ENCODE measurements at regions of chr1 and their contacts with region 1.

Region 1: DNA sequence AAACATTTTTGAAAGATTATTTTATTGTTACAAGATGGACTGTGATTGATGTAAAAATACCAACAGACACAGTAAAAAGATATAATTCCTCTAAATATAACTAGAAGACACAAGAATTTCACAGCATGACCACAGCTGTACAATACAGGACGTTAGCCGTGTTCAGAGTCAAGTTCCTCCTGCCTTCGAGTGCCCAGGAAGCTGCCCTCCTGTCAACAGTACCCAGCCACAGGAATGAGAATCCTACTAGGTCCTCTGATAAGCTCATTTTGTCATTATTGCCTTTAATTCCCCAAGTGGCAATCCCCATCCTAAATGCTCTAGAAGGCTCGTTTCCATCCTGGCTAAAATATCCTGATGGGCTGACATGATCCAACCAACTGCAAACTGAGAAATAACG is 16.4 kb upstream of the CAPN2 start:
- DNase-seq: no peak
- H3K4me3 ChIP-seq: no peak overlapping the region
- H3K4me3 Mint-ChIP-seq: no peak overlapping the region
- H3K27ac ChIP-seq: no peak overlapping the region
- H3K27ac Mint-ChIP-seq: no peak overlapping the region
- H3K4me1 ChIP-seq: peaks cover 7% of the 10 kb centered on the region
- H3K4me1 Mint-ChIP-seq: peaks cover 4 to 13% (median 5%) of the 10 kb centered on the region in 4 donors
- H3K27me3 ChIP-seq: no peaks in the 10 kb centered on the region
- H3K27me3 Mint-ChIP-seq: peaks cover 2 to 5% of the 10 kb centered on the region in 2 donors

Region 2: GRCh38 chr1:223683586-223684487 is 12.1 kb before region 1 on chr1:
- CTCF ChIA-PET with region 1: interaction called, 13 read pairs
- POLR2A ChIA-PET with region 1: no interaction called
- intact Hi-C with region 1: no loop called
- DNase-seq: peak; percentile 43 to 61 (median 52)
- H3K4me3 ChIP-seq: no peak overlapping the region
- H3K4me3 Mint-ChIP-seq: no peak overlapping the region
- H3K27ac ChIP-seq: no peak overlapping the region
- H3K27ac Mint-ChIP-seq: peak overlapping the region in 1 of 7 donors; percentile 67
- H3K4me1 ChIP-seq: no peaks in the 10 kb centered on the region
- H3K4me1 Mint-ChIP-seq: no peaks in the 10 kb centered on the region
- H3K27me3 ChIP-seq: no peaks in the 10 kb centered on the region
- H3K27me3 Mint-ChIP-seq: peaks cover 8 to 9% of the 10 kb centered on the region in 2 donors

Region 3: DNA sequence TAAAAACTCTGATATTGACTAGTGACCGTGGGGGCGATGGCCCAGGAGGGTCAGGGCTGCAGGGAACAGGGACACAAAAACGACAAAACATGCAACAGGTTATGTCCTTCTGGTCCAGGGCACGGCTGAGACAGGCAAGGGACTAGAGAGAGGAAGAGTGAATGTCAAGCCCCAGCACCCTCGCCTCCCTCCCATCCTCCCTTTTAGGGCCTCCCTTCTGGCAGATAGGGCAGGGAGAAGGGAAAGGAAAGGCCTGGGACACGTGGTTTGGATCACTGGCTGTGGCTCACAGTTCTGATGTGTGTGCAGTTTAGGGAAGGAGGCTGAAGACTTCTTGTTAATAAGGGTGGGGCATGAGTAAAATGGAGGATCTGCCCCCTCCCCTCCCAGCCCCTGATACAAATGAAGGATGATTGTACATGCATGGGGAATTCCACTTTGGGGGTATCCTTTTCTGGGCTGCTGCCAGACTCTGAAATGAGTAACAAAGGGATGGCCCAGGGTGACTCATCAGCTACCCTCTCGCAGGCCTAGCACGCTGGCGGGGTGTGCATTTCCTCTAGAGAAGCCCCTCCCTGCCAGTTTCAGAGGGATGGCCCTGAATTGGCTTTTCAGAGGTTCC is 30.6 kb after region 1 on chr1:
- CTCF ChIA-PET with region 1: interaction called, 15 read pairs
- POLR2A ChIA-PET with region 1: no interaction called
- intact Hi-C with region 1: no loop called
- DNase-seq: peak; percentile 68 to 98 (median 78)
- H3K4me3 ChIP-seq: peak overlapping the region in 1 of 2 donors; percentile 20
- H3K4me3 Mint-ChIP-seq: peak overlapping the region; percentile 70 to 92 (median 82)
- H3K27ac ChIP-seq: peak overlapping the region; percentile 85
- H3K27ac Mint-ChIP-seq: peak overlapping the region; percentile 85 to 99 (median 95)
- H3K4me1 ChIP-seq: peaks cover 80% of the 10 kb centered on the region
- H3K4me1 Mint-ChIP-seq: peaks cover 55 to 94% (median 74%) of the 10 kb centered on the region in 4 donors
- H3K27me3 ChIP-seq: no peaks in the 10 kb centered on the region
- H3K27me3 Mint-ChIP-seq: no peaks in the 10 kb centered on the region

Region 4: DNA sequence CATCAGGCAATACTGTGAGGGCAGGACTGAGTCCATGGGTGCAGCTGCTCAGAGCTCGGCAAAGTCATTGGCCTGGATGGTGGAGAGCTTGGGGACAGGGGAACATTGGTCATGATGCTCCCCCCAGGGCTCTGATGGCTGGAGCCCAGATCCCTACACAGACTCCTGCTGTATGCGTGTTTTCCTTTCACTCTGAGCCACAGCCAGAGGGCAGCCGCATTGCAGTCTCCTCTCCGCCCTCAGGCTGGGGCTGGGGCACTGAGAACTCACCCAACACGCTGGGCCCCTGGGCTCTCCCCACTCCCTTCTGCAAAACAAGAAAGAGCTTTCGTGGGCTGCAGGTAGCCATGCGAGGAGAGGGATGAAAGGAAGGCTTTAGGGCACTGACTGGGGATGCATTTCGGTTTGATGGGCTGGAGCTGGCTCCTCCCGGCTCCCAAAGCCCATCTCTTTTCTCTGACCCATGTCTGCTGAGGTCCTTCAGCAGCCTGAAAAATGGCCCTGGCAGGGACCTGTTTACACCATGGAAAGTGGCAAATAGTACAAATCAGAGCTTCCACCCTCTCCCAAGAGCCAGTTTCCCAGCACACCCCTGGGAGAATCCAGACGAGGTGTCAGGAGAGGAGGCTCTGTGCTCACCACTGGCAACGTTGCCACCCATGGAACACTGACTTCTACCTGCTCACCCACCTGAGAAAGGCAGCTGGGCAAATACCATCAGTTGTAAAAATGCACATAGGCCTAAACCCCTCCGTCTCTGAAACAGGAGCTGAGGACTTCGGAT is 60.2 kb after region 1 on chr1:
- CTCF ChIA-PET with region 1: interaction called, 74 read pairs
- POLR2A ChIA-PET with region 1: no interaction called
- intact Hi-C with region 1: no loop called
- DNase-seq: no peak
- H3K4me3 ChIP-seq: no peak overlapping the region
- H3K4me3 Mint-ChIP-seq: no peak overlapping the region
- H3K27ac ChIP-seq: no peak overlapping the region
- H3K27ac Mint-ChIP-seq: no peak overlapping the region
- H3K4me1 ChIP-seq: no peaks in the 10 kb centered on the region
- H3K4me1 Mint-ChIP-seq: peaks cover 0 to 2% (median 0%) of the 10 kb centered on the region in 4 donors
- H3K27me3 ChIP-seq: no peaks in the 10 kb centered on the region
- H3K27me3 Mint-ChIP-seq: no peaks in the 10 kb centered on the region

Region 5: GRCh38 chr1:224052772-224053171 is 356.8 kb after region 1 on chr1:
- CTCF ChIA-PET with region 1: interaction called, 10 read pairs
- POLR2A ChIA-PET with region 1: no interaction called
- intact Hi-C with region 1: loop called (anchors 1 kb)
- DNase-seq: no peak
- H3K4me3 ChIP-seq: no peak overlapping the region
- H3K4me3 Mint-ChIP-seq: no peak overlapping the region
- H3K27ac ChIP-seq: no peak overlapping the region
- H3K27ac Mint-ChIP-seq: no peak overlapping the region
- H3K4me1 ChIP-seq: peaks cover 5% of the 10 kb centered on the region
- H3K4me1 Mint-ChIP-seq: peaks cover 0 to 3% (median 1%) of the 10 kb centered on the region in 4 donors
- H3K27me3 ChIP-seq: no peaks in the 10 kb centered on the region
- H3K27me3 Mint-ChIP-seq: peaks cover 12 to 14% of the 10 kb centered on the region in 2 donors

Measured in CD4-positive, alpha-beta memory T cell (primary cell).